ENCODE measurements at regions of chr2 and their contacts with region 1.

Region 1: GRCh38 chr2:64330281-64331113 is 123.5 kb upstream of the LGALSL start:
- DNase-seq: peak; percentile 52
- CTCF ChIP-seq: peak; percentile 95

Region 2: DNA sequence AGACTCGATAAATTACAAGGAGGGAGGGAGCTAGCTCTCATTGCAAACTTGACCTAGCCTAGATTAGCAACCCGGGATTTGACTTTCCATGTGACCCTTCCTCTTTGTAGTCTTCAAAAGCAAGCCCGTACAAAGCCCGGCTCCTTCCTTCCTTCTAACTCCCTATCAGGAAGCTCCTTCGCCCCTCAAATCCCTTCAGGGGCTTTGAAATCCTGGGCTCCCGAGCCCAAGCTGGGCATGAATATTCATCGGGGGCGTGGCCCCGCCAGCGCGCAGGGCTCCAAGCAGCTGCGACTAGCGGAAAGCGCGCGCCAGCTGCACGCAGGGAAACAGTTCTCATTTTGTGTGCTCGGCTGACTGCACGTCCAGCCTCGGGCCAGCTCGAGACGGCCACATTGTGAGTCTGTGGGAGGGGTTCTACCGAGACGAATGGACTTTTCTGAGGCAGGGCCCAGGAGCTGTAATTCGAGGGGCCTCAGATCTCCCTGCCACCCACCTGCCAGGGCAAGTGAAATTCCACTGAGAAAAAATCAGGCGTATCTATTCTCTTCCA is 102.3 kb before region 1 on chr2:
- CTCF ChIA-PET with region 1: interaction called, 13 read pairs
- POLR2A ChIA-PET with region 1: interaction called, 3 read pairs
- DNase-seq: peak; percentile 85
- CTCF ChIP-seq: no peak

Region 3: DNA sequence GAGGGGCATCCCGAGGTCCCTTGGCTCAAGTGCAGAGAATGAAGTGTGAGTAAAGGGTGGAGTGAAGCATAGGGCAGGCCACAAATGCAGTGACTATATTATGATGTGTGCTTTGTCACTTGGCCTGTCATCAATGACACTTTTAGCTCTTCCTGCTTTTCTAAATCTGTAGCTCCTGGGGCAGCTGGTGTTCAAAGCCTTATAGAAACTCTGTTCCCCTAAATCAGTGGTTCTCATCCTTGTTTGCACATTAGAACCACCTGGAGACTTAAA is 12.1 kb before region 1 on chr2:
- CTCF ChIA-PET with region 1: interaction called, 38 read pairs
- POLR2A ChIA-PET with region 1: interaction called, 6 read pairs
- DNase-seq: no peak
- CTCF ChIP-seq: no peak

Region 4: DNA sequence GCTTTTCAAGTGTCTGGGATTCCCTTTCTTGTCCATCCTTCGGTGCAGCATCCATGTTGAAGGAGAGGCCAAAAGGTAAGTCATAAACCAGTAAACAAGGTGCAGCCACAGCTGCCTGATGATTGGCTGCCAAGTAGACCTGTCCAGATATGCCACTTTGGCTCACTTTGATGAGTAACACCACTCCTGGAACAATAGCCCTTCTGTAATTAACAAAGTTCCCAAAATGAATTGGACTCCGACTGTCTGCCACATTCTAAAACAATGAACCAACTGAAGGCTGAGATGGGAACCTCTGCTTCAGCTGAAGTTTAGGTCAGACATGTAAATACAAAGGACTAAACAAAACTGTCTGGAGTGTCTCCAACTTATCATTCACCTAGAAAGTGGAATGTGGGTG is 41.2 kb after region 1 on chr2:
- CTCF ChIA-PET with region 1: interaction called, 16 read pairs
- POLR2A ChIA-PET with region 1: interaction called, 4 read pairs
- DNase-seq: no peak
- CTCF ChIP-seq: no peak

Region 5: DNA sequence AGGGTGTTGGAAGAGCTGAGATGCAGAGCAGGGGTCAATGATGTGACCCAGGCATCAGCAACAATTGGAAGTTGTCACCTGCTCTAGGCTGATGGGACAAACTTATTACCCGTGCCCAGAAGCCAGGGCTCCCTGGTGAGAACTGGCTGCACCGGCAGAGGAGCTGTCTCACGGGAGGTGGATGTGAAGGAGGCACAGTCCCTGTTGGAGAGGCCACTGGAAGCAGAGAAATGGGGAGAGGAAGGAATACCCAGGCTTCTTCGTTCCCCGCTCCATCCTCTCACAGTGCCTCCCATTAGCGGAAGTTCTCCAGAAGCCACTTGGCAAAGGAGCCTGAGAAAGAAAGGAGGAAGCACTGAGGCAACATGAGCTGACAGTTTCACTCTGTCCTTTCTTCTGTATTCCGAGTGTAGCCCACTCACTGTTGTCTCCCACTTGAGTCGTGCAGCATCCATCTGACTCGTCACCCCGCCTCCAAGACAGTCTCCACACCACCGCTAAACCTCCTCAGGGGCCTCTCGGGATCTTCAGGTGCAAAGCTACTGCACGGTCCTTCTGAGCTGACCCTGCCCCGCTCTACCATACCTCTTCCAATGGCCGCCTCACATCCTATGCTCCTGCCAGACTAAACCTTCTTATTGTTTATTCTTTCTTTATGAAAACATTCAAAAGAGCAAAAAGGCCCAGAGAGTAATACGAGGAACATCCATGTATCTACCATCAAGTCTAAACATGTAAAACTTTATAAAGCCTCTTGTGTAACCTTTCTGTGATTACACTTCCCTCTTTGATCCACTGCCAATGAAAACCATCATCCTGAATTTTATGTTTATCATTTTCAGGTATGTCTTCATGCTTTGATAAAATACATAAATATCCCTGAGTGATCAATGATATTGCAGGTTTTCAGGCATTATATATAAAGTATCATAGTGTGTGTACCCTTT is 174.6 kb after region 1 on chr2:
- CTCF ChIA-PET with region 1: interaction called, 17 read pairs
- POLR2A ChIA-PET with region 1: no interaction called
- DNase-seq: no peak
- CTCF ChIP-seq: no peak

Region 6: DNA sequence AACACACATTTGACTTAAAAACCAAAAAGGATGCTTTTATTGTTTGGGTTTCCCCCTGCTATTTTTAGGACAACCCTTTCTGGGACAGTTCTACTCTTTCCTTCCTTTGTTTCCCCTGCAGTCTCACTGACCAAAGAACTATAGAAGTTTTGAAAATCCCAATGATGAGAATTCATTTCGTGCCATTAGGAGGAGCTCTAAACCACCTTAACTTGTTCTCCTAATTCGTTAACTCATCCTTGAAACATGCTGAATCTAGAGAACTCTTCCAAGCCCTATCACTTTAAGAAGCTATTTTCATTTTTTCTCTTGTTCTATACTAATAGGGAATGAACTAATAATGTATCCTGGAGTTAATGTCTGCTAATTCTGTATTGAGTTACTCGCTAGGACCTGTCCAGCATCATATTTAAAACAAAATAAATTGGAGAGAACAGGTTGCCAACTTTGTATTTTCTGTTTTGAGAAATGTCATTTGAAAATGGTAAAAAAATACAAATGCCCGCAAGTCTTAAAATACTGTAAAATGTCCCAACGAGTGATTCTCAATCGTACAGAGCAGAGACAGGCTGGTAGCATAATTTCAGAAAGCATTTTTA is 256.5 kb after region 1 on chr2:
- CTCF ChIA-PET with region 1: interaction called, 12 read pairs
- POLR2A ChIA-PET with region 1: no interaction called
- DNase-seq: peak; percentile 37
- CTCF ChIP-seq: peak; percentile 55

Measured in GM10248 (cell line).